CD4-positive, alpha-beta memory T cell (primary cell): ENCODE measurements at regions of chr17 and their contacts with region 1.

Region 1: DNA sequence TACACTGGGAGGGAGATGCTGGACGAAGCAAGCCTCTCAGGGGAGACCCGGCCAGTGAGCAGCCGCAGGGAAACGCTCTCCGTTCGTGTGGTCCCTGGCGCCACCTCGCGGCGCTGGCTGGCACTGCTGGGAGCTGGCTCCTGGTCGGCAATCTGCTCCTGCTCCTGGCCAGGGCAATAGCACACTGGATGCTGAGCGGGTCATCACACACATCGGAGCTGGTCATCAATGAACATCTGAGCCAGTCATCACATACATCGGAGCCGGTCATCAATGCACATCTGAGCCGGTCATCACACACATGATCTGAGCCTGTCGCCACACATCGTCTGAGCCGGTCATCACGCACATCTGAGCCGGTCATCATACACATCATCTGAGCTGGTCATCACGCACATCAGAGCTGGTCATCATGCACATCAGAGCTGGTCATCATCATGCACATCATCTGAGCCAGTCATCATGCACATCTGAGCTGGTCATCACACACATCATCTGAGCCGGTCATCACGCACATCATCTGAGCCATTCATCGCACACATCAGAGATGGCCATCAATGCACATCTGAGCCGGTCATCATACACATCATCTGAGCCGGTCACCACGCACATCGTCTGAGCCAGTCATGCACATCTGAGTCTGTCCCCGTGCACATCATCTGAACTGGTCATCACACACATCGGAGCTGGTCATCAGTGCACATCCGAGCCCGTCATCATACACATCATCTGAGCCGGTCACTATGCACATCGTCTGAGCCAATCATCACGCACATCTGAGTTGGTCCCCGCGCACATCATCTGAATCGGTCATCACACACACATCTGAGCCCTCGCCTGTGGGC is 217.3 kb downstream of the RBFOX3 start:
- DNase-seq: peak in 4 of 5 donors; percentile 43 to 59 (median 55)
- H3K4me3 ChIP-seq: no peak overlapping the region
- H3K4me3 Mint-ChIP-seq: no peak overlapping the region
- H3K27ac ChIP-seq: no peak overlapping the region
- H3K27ac Mint-ChIP-seq: no peak overlapping the region
- H3K4me1 ChIP-seq: no peaks in the 10 kb centered on the region
- H3K4me1 Mint-ChIP-seq: peaks cover 0 to 10% (median 6%) of the 10 kb centered on the region in 4 donors
- H3K27me3 ChIP-seq: no peaks in the 10 kb centered on the region
- H3K27me3 Mint-ChIP-seq: peaks cover 30 to 39% of the 10 kb centered on the region in 2 donors

Region 2: DNA sequence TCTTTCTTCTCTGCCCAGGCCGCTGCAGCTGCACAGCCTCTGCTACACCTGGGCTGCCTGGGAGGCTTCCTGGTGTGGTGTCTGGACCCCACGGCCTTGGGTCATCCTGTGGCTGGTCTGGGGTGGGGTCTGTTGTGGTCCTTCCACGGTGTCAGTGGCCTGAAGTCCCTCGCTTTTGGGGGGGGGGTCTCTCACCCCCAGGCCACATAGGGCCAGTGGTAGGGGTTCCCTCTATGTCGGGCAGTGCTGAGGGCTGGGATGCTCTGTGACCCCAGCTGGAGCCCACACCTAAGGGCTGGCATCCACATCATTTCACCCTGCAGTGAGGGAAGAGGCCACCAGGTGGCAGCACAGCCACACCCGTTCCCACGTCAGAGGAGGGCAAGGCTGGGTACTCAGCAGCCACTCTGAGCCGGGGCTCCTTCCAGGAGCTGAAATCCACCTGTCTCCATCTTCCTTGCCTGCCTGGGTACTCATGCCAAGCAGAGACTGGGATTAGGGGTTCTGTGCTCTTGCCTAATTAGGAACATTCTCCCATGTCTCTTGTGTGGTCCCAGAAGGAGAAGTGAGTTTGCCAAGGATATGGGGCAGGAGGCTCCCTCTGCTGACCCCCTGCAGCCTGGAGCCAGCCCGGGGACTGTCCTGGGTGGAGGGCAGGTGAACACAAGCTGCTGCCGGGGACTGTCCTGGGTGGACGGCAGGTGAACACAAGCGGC is 306.0 kb before region 1 on chr17:
- CTCF ChIA-PET with region 1: interaction called, 58 read pairs
- POLR2A ChIA-PET with region 1: no interaction called
- intact Hi-C with region 1: loop called (anchors 1 kb)
- DNase-seq: peak in 4 of 5 donors; percentile 61 to 70 (median 65)
- H3K4me3 ChIP-seq: no peak overlapping the region
- H3K4me3 Mint-ChIP-seq: no peak overlapping the region
- H3K27ac ChIP-seq: no peak overlapping the region
- H3K27ac Mint-ChIP-seq: no peak overlapping the region
- H3K4me1 ChIP-seq: no peaks in the 10 kb centered on the region
- H3K4me1 Mint-ChIP-seq: peaks cover 0 to 3% (median under 1%) of the 10 kb centered on the region in 4 donors
- H3K27me3 ChIP-seq: no peaks in the 10 kb centered on the region
- H3K27me3 Mint-ChIP-seq: peaks cover 4 to 5% of the 10 kb centered on the region in 2 donors